Posterior vena cava (tissue), 2 donors: ENCODE measurements at regions of chr10 and their contacts with region 1.

Region 1: GRCh38 chr10:27380929-27381358 is 123.2 kb upstream of the RAB18 start:
- DNase-seq: no peak

Region 2: DNA sequence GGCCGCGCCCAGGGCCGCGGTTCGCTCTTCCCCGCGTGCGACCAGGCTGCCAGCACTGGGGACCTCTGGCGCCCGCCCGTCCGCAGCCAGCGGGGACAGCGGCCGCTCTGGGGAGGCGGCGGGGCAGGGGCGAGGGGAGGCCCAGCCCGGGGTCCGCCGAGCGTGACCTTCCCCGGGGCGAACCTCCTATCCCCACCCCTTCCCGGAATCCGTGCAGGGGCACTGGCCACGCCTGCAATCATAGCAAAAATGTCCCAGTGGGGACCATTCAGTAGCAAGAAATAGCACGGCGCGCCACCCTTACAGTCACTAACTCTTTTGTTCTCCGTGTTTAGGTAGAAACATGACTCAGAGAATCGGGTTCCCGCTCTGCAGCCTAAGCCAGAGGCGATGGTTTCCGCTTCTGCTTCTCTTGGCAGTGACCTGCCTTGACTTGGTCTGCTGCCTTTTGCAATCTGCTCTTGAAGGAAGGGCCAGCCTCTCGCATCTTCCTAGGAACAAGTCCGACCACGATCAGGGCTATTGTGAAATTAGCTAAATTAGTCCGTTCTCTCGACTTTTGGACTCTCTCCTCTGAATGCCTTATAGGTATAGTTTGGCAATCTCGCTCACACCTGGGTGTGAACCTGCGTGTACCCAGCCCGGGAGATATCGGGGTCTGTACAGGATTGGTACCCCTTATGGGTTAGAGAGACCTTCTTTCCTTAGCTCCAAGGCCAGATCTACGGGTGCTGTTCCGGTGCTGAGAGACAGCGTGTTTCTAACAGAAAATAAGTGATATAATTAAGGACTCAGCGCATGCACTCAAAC is 61.0 kb before region 1 on chr10:
- intact Hi-C with region 1: loop called in 1 of 2 experiments (anchors 2 kb)
- DNase-seq: peak; percentile 88